A549 (cell line): ENCODE measurements at regions of chr6 and their contacts with region 1.

Region 1: DNA sequence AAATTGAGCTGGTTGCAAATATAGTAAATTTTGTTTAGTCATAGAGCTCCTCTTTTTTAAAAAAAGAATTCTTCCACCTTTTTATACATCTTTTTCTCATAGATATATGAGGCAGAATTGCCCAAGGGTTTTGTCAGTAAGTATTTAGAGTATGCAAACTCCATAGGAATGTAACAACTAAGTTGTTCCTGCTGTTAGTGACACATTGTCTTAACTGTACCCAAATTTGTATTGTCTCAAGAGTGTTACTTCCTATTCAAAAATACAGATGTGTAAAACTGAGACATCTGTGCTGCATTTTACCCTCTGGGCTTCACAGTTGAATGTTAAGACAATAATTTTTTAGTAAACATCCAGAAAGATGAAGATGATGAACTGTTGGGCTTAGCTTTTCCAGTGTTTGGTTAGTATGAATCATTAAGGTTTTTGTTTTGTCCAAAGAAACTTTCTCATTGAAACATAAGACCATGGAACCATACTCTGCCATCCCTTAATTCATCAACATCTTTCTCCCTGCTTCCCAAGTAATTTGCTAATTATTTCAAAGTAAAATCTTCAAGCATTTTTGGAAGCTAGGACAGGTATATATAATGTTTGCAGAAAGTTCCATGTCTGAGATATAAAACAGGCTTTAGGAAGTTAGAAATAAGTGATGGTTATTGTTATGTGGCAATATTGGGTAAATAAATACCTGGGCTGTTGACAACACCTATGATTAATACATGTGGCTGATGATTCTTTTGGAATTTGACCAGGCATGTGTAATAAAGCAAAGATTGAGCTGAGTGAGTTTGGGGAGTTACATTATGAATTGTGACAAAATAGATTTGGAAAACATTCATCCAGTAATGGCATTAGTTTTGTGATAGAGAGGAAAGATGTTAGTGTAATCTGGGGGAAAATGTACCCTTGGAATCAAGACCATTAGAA is 11.2 kb downstream of the OGFRL1 start:
- DNase-seq: no peak
- ATAC-seq: no peak
- H3K4me3 ChIP-seq: no peak overlapping the region
- H3K27ac ChIP-seq: no peak overlapping the region
- H3K4me1 ChIP-seq: peaks cover 25% of the 10 kb centered on the region
- CTCF ChIP-seq: no peak
- EP300 ChIP-seq: no peak
- POLR2A ChIP-seq: no peak
- RAD21 ChIP-seq: no peak

Region 2: DNA sequence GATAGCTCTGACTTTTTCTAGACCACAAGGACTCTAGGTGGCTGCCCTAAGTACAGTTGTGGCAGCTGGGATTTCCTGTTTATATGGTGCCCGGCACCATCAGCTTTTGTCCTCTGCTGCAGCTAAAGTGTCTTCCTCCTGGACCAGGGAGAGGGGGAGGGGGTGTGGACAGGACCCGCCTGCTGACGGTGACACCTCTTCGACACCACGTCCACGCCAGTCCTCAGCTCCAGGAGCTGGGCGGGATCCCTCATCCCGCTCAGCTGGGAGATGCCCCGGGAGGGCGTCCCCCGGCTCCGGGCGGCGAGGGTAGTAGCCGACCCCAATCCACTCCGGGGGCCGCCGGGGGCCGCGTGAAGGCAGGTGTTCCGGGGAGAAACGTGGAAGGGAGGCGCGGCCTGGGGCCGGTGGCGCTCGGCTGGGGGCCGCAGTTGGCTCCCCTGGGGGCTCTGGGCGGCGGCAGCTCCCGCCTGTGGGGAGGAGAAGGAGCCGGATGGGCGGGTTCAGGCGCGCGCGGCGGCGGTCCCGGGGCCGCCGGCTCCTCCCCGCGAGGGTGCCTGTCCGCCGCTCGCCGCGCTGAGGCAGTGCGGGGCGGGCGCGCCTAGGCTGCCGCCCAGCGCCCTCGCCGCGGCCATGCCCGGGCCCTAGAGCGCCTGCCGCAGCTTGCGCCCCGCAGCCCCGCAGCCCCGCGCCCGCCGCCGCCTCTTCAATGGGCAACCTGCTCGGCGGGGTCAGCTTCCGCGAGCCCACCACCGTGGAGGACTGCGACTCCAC is 11.4 kb before region 1 on chr6 and contains the start of gene OGFRL1:
- CTCF ChIA-PET with region 1: interaction called, 12 read pairs
- POLR2A ChIA-PET with region 1: interaction called, 3 read pairs
- DNase-seq: peak; percentile 57
- ATAC-seq: peak; percentile 95 to 97
- H3K4me3 ChIP-seq: peak within 1 kb of the TSS; percentile 90
- H3K27ac ChIP-seq: peak within 1 kb of the TSS; percentile 90 to 98
- H3K4me1 ChIP-seq: peaks cover 38% of the 10 kb centered on the region
- CTCF ChIP-seq: 0 out of 3 replicates have a peak, but pooled peaks have one; percentile 5
- EP300 ChIP-seq: no peak
- POLR2A ChIP-seq: peak; percentile 90
- RAD21 ChIP-seq: no peak; a peak in 1 of 5 replicates
- polyA plus RNA-seq, gene OGFRL1: 9.0 and 15.2 TPM in 2 replicates